Right ventricle myocardium superior (tissue), 1 donor: ENCODE measurements at regions of chr6 and their contacts with region 1.

Region 1: GRCh38 chr6:157981395-157982296 is at the start of gene SYNJ2:
- DNase-seq: peak; percentile 85
- ATAC-seq: peak; percentile 93
- total RNA-seq, gene SYNJ2: 14.0 TPM

Region 2: GRCh38 chr6:157823001-157823527 is 158.6 kb before region 1 on chr6 and contains the start of gene SNX9:
- intact Hi-C with region 1: no loop called
- DNase-seq: peak; percentile 89
- ATAC-seq: peak; percentile 91
- total RNA-seq, gene SNX9: 34.4 TPM

Region 3: GRCh38 chr6:158029668-158030230 is 48.1 kb after region 1 on chr6:
- intact Hi-C with region 1: no loop called
- DNase-seq: peak; percentile 37
- ATAC-seq: no peak

Region 4: GRCh38 chr6:158040051-158040803 is 58.6 kb after region 1 on chr6:
- intact Hi-C with region 1: loop called (anchors 5 kb)
- DNase-seq: peak; percentile 10
- ATAC-seq: no peak

Region 5: GRCh38 chr6:158072083-158072721 is 90.6 kb after region 1 on chr6:
- intact Hi-C with region 1: loop called (anchors 5 kb)
- DNase-seq: peak; percentile 83
- ATAC-seq: peak; percentile 82

Region 6: GRCh38 chr6:158122048-158122447 is 140.4 kb after region 1 on chr6:
- intact Hi-C with region 1: no loop called
- DNase-seq: no peak
- ATAC-seq: no peak